ENCODE measurements at regions of chr11 and their contacts with region 1.

Region 1: GRCh38 chr11:19742588-19743292 is 30.1 kb downstream of the NAV2 start:
- ATAC-seq: peak; percentile 85 to 97 (median 94)
- H3K4me3 ChIP-seq: no peak overlapping the region
- H3K27ac ChIP-seq: no peak overlapping the region
- H3K4me1 ChIP-seq: peaks cover 16 to 18% of the 10 kb centered on the region in 2 donors

Region 2: DNA sequence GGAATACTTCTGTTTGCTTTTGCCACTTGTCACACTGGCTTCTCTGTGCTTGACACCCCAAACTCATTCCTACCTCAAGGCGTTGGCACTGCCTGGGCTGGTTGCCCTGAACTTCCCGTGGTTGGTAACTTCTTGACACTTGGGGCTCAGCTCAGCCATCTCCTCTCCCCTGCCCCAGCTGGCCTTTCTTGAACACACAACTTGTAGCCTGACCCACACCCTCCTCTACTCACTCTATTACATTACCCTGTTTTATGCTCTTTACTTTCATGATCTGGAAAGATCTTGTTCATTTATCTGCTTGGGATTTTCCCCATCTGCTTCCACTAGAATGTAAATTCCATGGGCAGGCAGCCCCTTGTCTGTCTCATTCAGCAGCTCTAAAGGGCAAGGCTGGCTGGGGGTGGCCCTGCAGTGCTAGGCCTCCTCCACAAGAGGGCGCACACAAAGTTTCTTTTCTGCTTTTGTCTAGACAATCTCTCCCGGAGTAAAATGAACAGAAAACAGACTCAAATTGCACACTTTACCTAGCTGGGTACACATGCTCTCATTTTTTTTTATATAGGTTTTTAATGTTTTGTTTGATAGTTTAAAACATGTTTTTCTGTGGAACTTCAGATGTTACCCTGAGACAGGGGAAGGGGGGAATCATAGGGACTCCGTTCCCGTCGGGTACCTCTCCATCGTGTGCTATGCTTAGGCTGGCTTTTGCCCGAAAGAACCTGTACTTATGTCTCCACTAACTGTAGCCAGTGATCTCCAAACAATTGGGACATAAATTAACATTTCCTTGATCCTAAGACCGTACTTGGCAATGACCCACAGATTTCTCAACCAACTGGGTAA is 665.8 kb before region 1 on chr11:
- in situ Hi-C with region 1: loop called in 2 of 9 experiments (anchors 25 kb)
- ATAC-seq: peak; percentile 41 to 81 (median 57)
- H3K4me3 ChIP-seq: no peak overlapping the region
- H3K27ac ChIP-seq: no peak overlapping the region
- H3K4me1 ChIP-seq: peaks cover 0 to 6% of the 10 kb centered on the region in 2 donors

Region 3: DNA sequence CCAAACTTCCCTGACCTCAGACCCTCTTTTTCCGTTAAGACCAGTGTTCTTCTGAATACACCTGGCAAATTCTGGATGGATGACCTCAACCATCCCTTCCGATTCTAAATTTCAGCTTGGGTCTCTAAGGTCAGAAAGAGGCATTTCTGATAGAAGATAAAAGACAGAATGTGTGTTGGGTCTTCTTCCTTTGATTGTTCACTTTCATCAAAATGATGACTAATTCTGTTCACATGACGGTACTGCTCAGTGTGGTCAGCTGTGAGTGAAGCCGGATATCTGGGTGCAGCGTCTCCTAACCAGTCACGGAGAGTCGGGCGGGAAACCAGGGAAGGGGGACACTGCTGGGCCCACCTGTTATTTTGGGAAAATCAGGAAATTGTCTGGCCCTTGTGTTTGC is 181.7 kb before region 1 on chr11:
- in situ Hi-C with region 1: loop called (anchors 5 to 25 kb)
- ATAC-seq: peak in 2 of 8 experiments; percentile 21 to 43
- H3K4me3 ChIP-seq: no peak overlapping the region
- H3K27ac ChIP-seq: no peak overlapping the region
- H3K4me1 ChIP-seq: peaks cover 15% of the 10 kb centered on the region in 2 donors

Region 4: GRCh38 chr11:19566583-19567379 is 176.0 kb before region 1 on chr11:
- in situ Hi-C with region 1: loop called (anchors 5 to 25 kb)
- ATAC-seq: peak in 3 of 8 experiments; percentile 28 to 48 (median 33)
- H3K4me3 ChIP-seq: no peak overlapping the region
- H3K27ac ChIP-seq: no peak overlapping the region
- H3K4me1 ChIP-seq: peaks cover 10 to 15% of the 10 kb centered on the region in 2 donors

Region 5: GRCh38 chr11:19903620-19904069 is 160.9 kb after region 1 on chr11:
- in situ Hi-C with region 1: loop called in 1 of 9 experiments (anchors 10 kb)
- ATAC-seq: peak; percentile 72 to 91 (median 80)
- H3K4me3 ChIP-seq: no peak overlapping the region
- H3K27ac ChIP-seq: no peak overlapping the region
- H3K4me1 ChIP-seq: peaks cover 0 to 8% of the 10 kb centered on the region in 2 donors

Region 6: GRCh38 chr11:20000351-20001134 is 257.8 kb after region 1 on chr11:
- in situ Hi-C with region 1: no loop called
- ATAC-seq: peak in 6 of 8 experiments; percentile 29 to 96 (median 94)
- H3K4me3 ChIP-seq: no peak overlapping the region
- H3K27ac ChIP-seq: peak overlapping the region; percentile 75 to 76
- H3K4me1 ChIP-seq: peaks cover 49 to 51% of the 10 kb centered on the region in 2 donors

Measured in motor neuron (in vitro differentiated cells).